Activated T-helper 2 cell treated with anti-CD3 and anti-CD28 coated beads, Interferon-gamma antibody, Interleukin-2, Interleukin-4, amounts not matched to agents 10 μg/mL and 5 μg/mL and 100 μg/mL, durations not matched to agents 14 hours and 24 hours and 36 hours (primary cell): ENCODE measurements at regions of chr13 and their contacts with region 1.

Region 1: DNA sequence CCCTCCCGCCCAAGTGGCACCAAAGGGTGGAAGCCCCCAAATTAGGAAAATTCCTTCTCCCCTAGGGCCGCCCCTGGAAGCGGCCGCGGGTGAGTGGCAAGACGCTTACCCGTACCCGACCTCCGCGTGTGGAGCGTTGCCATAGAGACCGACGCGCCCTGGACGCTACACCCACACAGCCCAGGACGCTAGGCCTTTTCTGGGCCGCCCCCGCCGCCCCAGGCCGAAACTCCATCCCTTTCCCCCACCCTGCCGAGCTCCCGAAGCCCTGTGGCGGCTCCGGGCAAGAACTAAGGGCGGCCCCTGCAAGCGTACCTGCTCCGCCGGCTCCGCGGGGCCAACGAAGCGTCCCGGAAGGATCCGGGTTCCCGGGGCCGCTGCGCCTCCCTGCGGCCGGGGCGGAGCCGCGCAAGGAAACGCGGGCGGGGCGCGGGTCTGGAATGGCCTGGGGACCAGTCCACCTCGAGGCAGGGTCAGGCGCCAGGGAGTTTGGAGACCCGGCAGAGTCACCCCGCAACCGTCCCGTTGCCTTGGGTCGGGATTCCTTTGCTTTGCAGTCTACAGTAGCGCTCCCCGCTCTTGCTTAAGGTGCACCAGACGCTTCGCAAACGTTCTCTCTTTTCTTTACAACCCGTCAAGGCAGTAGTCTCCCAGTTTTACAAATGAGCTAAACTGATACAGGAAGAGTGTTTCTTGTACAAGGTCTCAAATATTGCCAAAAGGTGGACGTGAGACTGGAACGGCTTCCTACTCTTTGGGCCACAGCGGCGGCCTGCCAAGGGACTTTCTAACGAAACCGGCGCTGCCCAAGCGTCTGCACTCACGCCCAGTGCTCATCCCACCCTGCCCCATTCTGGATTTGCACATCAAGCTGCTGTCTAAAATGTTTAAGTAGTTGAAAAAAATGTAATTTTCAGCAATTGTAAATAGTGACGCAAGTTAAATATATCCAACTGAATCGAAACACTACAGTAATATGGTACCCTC is at the start of gene NEK5:
- DNase-seq: peak; percentile 49
- H3K4me3 Mint-ChIP-seq: peak within 1 kb of the TSS; percentile 75
- H3K27ac Mint-ChIP-seq: no peak within 1 kb of the TSS
- H3K4me1 Mint-ChIP-seq: peaks cover 16% of the 10 kb centered on the region
- H3K27me3 Mint-ChIP-seq: peaks cover 14% of the 10 kb centered on the region
- total RNA-seq, gene NEK5: not detected in 2 replicates

Region 2: DNA sequence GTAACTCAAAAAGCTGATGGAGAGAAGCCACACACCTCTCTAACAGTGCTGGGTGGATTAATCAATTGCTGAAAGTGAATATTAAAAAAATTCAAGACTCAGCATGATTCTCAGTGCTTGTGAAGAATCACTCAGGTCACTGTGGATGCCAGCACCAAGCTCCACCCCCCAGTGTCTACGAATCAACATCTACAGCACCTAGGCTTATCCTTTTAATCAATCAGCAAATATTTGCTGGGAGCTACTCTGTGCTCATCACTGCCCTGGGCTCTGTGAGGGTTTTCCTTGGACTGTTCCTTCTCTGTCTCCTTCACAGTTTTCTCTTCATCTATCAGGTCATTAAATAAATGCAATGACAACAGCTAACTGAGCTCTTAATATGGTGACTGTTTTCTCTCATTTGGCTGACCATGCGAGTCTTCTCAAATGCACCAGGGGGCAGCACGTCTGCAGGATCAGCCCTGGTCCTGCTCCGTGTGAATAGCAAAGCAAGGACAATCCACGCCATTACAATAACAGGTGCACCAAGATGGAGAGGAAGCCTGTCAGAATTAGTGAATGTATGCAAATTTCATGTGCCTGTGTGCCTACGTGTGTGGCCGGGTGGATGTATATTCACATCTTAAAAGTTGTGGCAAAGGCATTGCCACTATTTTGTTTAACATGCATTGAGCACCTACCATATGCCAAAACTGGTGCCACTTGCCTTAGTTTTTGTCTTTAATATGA is 1003.3 kb before region 1 on chr13:
- intact Hi-C with region 1: loop called (anchors 5 kb)
- DNase-seq: no peak
- H3K4me3 Mint-ChIP-seq: no peak overlapping the region
- H3K27ac Mint-ChIP-seq: no peak overlapping the region
- H3K4me1 Mint-ChIP-seq: peaks cover 25% of the 10 kb centered on the region
- H3K27me3 Mint-ChIP-seq: peaks cover 18% of the 10 kb centered on the region

Region 3: DNA sequence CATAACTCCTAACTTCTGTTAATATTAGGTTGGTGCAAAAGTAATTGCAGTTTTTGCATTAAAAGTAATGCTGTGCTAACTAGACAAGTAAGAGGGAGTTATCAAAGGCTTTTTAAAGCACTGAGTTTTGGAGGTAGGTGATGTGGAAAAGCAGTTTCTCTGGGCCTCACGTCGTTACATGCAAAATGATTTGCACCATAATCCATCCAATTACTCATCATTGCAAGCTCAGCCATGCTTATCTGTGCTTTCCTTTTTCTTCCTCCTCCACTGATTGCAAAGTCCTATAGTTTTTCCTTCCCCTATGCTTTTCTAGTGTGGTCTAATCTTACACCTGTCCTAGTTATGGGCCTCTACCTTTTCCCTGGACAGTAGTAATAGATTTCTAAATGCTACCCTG is 640.8 kb before region 1 on chr13:
- intact Hi-C with region 1: no loop called
- DNase-seq: no peak
- H3K4me3 Mint-ChIP-seq: no peak overlapping the region
- H3K27ac Mint-ChIP-seq: no peak overlapping the region
- H3K4me1 Mint-ChIP-seq: no peaks in the 10 kb centered on the region
- H3K27me3 Mint-ChIP-seq: no peaks in the 10 kb centered on the region

Region 4: DNA sequence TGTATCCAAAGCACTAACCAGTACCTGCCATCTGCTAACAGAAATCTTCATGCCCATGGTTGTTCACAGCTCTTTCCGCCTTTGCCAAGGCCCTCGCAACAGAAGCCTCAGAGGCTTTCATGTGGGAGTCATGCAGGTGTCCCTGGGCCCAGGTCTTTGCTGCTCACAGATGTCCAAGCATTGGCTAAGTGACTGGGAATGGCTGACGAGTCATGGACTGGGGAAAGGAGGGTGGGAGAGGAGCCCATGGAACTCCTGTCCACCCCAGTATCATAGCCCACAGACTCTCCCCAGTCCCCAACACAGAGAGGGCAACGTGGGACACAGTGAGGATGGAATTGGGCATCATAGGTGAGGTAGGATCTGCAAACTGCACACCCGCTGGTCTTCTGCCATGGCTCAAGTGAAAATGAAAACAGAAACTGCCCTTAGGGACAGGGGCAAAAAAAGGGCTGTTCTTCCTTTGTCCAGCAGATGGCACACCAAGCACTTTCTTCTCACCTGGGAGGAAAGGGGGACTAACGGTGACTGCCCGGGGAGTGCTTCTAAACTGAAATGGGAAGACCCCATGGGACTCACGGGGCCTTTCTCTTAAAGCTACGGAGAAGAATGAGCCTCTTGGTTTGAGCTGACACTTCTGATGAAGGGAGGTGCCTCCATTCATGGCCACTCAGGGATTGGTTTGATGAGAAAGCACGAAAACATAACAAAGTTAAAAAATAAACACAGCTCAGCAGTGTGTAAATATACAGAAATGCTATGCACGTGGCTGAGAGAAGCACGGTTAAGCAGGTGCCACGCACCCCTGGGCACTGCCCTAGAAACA is 314.0 kb before region 1 on chr13:
- intact Hi-C with region 1: loop called (anchors 2 kb)
- DNase-seq: peak; percentile 69
- H3K4me3 Mint-ChIP-seq: no peak overlapping the region
- H3K27ac Mint-ChIP-seq: no peak overlapping the region
- H3K4me1 Mint-ChIP-seq: peaks cover 39% of the 10 kb centered on the region
- H3K27me3 Mint-ChIP-seq: peaks cover 16% of the 10 kb centered on the region

Region 5: GRCh38 chr13:51844862-51845573 is 284.0 kb before region 1 on chr13 and contains the start of gene TMEM272:
- intact Hi-C with region 1: loop called (anchors 5 kb)
- DNase-seq: peak; percentile 26
- H3K4me3 Mint-ChIP-seq: peak within 1 kb of the TSS; percentile 20
- H3K27ac Mint-ChIP-seq: no peak within 1 kb of the TSS
- H3K4me1 Mint-ChIP-seq: peaks cover 10% of the 10 kb centered on the region
- H3K27me3 Mint-ChIP-seq: peaks cover 25% of the 10 kb centered on the region
- total RNA-seq, gene TMEM272: 0.18 TPM in 1 of 2 replicates, not detected in the other

Region 6: DNA sequence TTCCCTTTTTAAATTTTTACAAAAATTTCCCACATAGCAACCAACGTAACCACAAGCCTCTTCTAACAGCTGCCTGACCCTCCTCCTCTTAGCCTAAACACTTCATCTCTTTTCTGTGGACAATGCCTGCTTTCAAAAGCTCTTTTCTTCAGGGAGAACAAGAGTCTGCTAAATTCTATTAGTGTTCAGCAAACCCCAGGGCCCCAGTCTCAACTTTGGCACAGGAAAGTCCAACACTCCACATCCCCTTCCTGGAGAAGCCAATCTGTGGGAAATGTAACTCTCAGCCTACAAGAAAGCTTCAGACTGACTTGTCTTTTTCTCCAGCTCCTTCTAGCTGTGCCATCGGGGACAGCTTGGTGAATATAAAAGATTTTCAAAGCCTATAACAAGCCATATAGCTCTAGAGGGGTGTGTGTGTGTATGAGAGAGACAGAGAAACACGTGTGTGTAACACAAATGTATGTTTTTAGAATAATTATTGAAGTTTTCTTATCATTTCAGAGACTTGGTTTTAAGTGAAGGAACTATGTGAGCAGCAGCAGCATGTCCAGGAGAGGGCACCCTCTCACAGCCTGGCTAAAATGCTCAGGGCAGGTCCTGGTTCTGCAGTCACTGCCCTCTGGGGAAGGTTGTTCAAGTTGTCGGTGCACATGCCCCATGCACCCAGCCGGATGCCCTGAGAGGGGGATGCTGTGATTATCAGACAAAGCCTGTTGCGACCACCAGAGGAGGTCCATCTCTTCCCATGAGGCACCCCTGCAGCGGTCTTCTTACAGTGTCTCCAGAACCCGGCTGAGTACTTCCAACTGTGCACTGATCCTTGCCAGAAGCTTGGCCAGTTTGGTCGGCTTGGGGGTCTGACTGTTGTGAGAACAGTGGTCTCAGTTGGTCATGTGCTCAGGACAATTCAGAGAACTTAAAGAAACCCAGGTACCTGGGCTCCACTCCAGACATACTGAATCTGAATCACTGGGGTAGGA is 232.8 kb before region 1 on chr13:
- intact Hi-C with region 1: loop called (anchors 1 kb)
- DNase-seq: peak; percentile 42
- H3K4me3 Mint-ChIP-seq: no peak overlapping the region
- H3K27ac Mint-ChIP-seq: no peak overlapping the region
- H3K4me1 Mint-ChIP-seq: peaks cover 2% of the 10 kb centered on the region
- H3K27me3 Mint-ChIP-seq: peaks cover 6% of the 10 kb centered on the region

Region 7: DNA sequence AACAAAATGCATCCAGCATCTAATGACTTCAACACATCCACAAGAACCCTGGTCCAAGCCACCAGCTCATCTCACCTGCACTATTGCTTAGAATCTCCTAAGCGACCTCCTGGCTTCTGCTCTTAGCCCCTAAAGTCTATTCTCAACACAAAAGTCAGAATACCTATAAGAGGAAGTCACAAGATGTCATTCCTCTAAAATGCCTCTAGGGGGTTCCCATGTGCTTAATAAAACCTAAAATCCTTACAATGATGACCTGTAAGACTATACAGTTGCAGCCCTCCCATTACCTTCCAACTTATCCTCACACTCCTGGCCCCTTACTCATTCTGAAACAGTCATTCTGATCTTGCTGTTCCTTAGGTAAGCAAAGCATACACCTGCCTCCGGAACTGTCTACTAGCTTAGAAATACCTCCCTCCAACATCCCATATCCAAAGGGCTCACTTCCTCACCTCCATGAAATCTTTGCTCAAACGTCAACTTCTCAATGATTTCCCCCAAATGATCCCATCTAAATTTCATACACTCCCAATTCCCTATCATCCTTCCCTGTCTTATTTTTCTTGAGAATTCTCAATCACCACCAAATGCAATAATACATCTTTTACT is 127.8 kb before region 1 on chr13:
- intact Hi-C with region 1: loop called (anchors 2 kb)
- DNase-seq: no peak
- H3K4me3 Mint-ChIP-seq: no peak overlapping the region
- H3K27ac Mint-ChIP-seq: no peak overlapping the region
- H3K4me1 Mint-ChIP-seq: no peaks in the 10 kb centered on the region
- H3K27me3 Mint-ChIP-seq: peaks cover 24% of the 10 kb centered on the region

Region 8: DNA sequence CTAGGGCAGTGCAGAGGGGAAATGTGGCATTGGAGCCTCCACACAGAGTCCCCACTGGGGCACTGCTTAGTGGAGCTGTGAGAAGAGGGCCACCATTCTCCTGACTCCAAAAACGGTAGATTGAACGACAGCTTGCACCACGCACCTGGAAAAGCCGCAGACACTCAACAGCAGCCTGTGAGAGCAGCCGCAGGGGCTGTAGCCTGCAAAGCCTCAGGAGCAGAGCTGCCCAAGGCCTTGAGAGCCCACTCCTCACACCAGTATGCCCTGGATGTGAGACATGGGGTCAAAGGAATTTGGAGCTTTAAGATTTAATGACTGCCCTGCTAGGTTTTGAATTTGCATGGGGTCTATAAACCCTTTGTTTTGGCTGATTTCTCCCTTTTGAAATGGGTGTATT is 31.8 kb before region 1 on chr13:
- intact Hi-C with region 1: no loop called
- DNase-seq: no peak
- H3K4me3 Mint-ChIP-seq: no peak overlapping the region
- H3K27ac Mint-ChIP-seq: no peak overlapping the region
- H3K4me1 Mint-ChIP-seq: no peaks in the 10 kb centered on the region
- H3K27me3 Mint-ChIP-seq: peaks cover 4% of the 10 kb centered on the region

Region 9: GRCh38 chr13:52118595-52118994 is 10.4 kb before region 1 on chr13:
- intact Hi-C with region 1: no loop called
- DNase-seq: no peak
- H3K4me3 Mint-ChIP-seq: no peak overlapping the region
- H3K27ac Mint-ChIP-seq: no peak overlapping the region
- H3K4me1 Mint-ChIP-seq: no peaks in the 10 kb centered on the region
- H3K27me3 Mint-ChIP-seq: peaks cover 32% of the 10 kb centered on the region

Region 10: GRCh38 chr13:52156724-52157251 is 27.8 kb after region 1 on chr13:
- intact Hi-C with region 1: no loop called
- DNase-seq: no peak
- H3K4me3 Mint-ChIP-seq: peak overlapping the region; percentile 6
- H3K27ac Mint-ChIP-seq: no peak overlapping the region
- H3K4me1 Mint-ChIP-seq: peaks cover 27% of the 10 kb centered on the region
- H3K27me3 Mint-ChIP-seq: peaks cover 3% of the 10 kb centered on the region

Region 11: DNA sequence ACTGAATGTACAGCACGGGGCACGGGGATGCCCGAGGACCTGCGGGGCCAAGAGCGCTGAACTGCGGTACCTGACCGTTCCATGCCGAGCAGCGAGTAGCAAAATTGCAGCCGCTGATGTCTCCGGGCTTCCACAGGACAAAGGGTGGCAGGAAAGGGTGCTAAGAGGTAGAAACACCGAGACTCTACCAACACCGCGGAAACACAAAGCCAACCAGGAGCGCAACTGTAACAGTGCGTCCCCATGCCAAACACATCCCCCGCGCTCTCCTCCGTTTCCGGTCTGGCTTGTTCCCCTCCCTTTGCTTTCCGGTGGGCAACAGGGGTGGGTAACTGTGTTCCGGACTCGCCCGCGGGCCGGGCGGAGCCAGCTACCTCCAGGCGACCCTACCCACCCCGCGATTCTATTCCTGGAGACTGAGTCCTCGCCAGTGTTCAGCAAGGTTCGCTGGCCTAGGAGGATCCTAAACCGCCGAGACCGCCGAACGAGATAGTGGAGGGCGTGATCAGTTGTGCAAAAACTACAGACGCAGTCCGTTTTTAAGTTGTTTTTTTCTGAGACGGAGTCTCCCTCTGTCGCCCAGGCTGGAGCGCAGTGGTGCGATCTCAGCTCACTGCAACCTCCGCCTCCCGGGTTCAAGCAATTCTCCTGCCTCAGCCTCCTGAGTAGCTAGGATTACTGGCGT is 65.3 kb after region 1 on chr13:
- intact Hi-C with region 1: loop called (anchors 2 kb)
- DNase-seq: peak; percentile 88
- H3K4me3 Mint-ChIP-seq: peak overlapping the region; percentile 95
- H3K27ac Mint-ChIP-seq: peak overlapping the region; percentile 96
- H3K4me1 Mint-ChIP-seq: peaks cover 9% of the 10 kb centered on the region
- H3K27me3 Mint-ChIP-seq: no peaks in the 10 kb centered on the region